H1 (cell line): ENCODE measurements at regions of chr11 and their contacts with region 1.

Region 1: GRCh38 chr11:93543292-93543977 is at the start of gene SMCO4:
- DNase-seq: peak; percentile 74 to 91
- H3K4me3 ChIP-seq: peak within 1 kb of the TSS; percentile 58 to 84 (median 70)
- H3K27ac ChIP-seq: peak within 1 kb of the TSS; percentile 5; the same call in 1 of the 2 replicates
- H3K4me1 ChIP-seq: peaks cover 3 to 15% (median 11%) of the 10 kb centered on the region in 4 experiments; a peak in 5 of 7 replicates
- H3K27me3 ChIP-seq: no peaks in the 10 kb centered on the region
- CTCF ChIP-seq: peak; percentile 71 to 91 (median 81)
- EP300 ChIP-seq: peak in 1 of 2 experiments; percentile 73; a peak in 1 of 3 replicates
- POLR2A ChIP-seq: peak in 1 of 2 experiments; percentile 34; a peak in 2 of 3 replicates
- RAD21 ChIP-seq: peak; percentile 85 to 90
- total RNA-seq, gene SMCO4: 53.9 and 57.0 TPM in 2 replicates

Region 2: GRCh38 chr11:93476796-93477195 is 66.6 kb before region 1 on chr11:
- CTCF ChIA-PET with region 1: interaction called, 4 read pairs
- POLR2A ChIA-PET with region 1: interaction called, 16 read pairs
- DNase-seq: no peak
- H3K4me3 ChIP-seq: no peak overlapping the region
- H3K27ac ChIP-seq: no peak overlapping the region
- H3K4me1 ChIP-seq: peaks cover 10 to 23% (median 20%) of the 10 kb centered on the region in 4 experiments
- H3K27me3 ChIP-seq: no peaks in the 10 kb centered on the region
- CTCF ChIP-seq: no peak
- EP300 ChIP-seq: no peak
- POLR2A ChIP-seq: no peak
- RAD21 ChIP-seq: no peak

Region 3: DNA sequence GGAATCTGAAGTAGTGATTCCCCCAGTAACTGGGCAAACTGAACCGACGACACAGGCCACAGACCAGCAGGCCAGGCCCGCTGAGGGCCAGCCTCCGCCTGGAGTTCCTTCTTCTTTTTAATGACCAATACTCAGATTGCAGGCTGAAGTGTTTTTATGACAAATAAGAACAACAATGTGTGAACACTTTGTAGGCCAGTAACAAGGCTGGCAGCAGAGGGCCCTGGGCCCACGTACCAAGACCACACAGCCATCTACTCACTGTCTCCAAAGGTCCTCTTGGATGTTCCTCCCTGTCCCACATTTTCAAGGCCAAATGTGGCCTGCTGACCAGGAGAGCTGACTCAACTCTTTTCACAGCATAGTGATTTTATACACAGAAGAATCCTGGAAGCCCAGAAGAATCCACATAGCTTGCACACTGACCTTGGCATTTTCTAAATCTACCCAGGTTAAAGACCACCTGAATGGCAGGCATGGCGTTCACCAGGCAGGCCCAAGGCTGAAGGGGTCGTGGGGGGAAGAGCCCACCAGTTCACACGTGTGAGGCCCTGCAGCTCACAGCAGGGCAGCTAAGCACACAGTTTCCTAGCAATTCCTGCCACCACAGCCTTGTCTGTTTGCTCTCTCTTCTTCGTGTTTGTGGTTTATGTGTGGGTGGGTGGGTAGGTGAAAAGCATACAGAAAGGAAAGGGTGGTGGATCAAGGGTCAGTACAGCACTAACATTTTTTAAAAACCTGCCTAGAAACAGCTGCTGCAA is 13.5 kb before region 1 on chr11:
- CTCF ChIA-PET with region 1: interaction called, 6 read pairs
- POLR2A ChIA-PET with region 1: interaction called, 15 read pairs
- DNase-seq: no peak
- H3K4me3 ChIP-seq: no peak overlapping the region
- H3K27ac ChIP-seq: no peak overlapping the region
- H3K4me1 ChIP-seq: peaks cover 0 to 7% (median 6%) of the 10 kb centered on the region in 4 experiments; a peak in 4 of 7 replicates
- H3K27me3 ChIP-seq: no peaks in the 10 kb centered on the region
- CTCF ChIP-seq: no peak
- EP300 ChIP-seq: no peak
- POLR2A ChIP-seq: no peak
- RAD21 ChIP-seq: no peak

Region 4: GRCh38 chr11:93672280-93672679 is 128.8 kb after region 1 on chr11:
- CTCF ChIA-PET with region 1: no interaction called
- POLR2A ChIA-PET with region 1: no interaction called
- DNase-seq: no peak
- H3K4me3 ChIP-seq: no peak overlapping the region
- H3K27ac ChIP-seq: no peak overlapping the region
- H3K4me1 ChIP-seq: no peaks in the 10 kb centered on the region
- H3K27me3 ChIP-seq: no peaks in the 10 kb centered on the region
- CTCF ChIP-seq: no peak
- EP300 ChIP-seq: no peak
- POLR2A ChIP-seq: no peak
- RAD21 ChIP-seq: no peak